ENCODE measurements at regions of chr6 and their contacts with region 1.

Region 1: GRCh38 chr6:142926494-142927270 is 18.3 kb downstream of the HIVEP2 start:
- DNase-seq: peak; percentile 66 to 91 (median 83)
- H3K4me3 ChIP-seq: peak overlapping the region; percentile 92
- H3K4me3 Mint-ChIP-seq: peak overlapping the region; percentile 89 to 98 (median 94)
- H3K27ac ChIP-seq: peak overlapping the region; percentile 97
- H3K27ac Mint-ChIP-seq: peak overlapping the region; percentile 93 to 100 (median 98)
- H3K4me1 ChIP-seq: peaks cover 54% of the 10 kb centered on the region
- H3K4me1 Mint-ChIP-seq: peaks cover 58 to 76% (median 71%) of the 10 kb centered on the region in 3 donors
- H3K27me3 ChIP-seq: no peaks in the 10 kb centered on the region
- H3K27me3 Mint-ChIP-seq: no peaks in the 10 kb centered on the region

Region 2: DNA sequence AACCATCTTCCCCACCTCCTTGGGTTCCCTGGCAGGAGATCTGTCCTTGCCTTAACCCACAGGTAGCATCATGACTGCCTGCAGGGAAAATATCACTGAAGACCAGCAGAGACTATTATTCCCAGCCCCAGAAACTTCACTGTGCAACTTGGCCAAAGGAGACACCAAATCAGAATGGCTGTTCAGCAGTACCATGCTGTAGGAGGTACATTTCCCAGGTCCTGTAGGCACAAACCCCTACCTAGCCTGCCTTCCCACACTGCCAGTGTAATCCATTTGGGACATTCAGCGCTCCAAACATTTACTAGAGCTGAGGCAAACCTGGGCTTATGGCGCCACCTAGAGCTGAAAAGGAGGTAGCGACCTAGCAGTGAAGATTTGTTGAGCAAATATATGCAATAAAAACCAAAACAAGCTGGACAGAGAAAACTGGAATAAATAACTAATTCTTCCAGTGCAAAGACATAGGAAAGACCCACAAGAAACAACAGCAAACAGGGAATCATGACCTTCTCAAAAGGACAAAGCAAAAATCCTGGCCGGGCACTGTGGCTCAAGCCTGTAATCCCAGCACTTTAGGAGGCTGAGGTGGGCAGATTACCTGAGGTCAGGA is 719.3 kb before region 1 on chr6:
- CTCF ChIA-PET with region 1: no interaction called
- POLR2A ChIA-PET with region 1: no interaction called
- DNase-seq: peak; percentile 6 to 60 (median 23)
- H3K4me3 ChIP-seq: no peak overlapping the region
- H3K4me3 Mint-ChIP-seq: no peak overlapping the region
- H3K27ac ChIP-seq: no peak overlapping the region
- H3K27ac Mint-ChIP-seq: peak overlapping the region in 3 of 8 donors; percentile 19 to 57 (median 47)
- H3K4me1 ChIP-seq: no peaks in the 10 kb centered on the region
- H3K4me1 Mint-ChIP-seq: peaks cover 0 to 4% (median 3%) of the 10 kb centered on the region in 3 donors
- H3K27me3 ChIP-seq: no peaks in the 10 kb centered on the region
- H3K27me3 Mint-ChIP-seq: no peaks in the 10 kb centered on the region

Region 3: GRCh38 chr6:142756215-142756634 is 170.5 kb before region 1 on chr6:
- CTCF ChIA-PET with region 1: no interaction called
- POLR2A ChIA-PET with region 1: no interaction called
- DNase-seq: no peak
- H3K4me3 ChIP-seq: no peak overlapping the region
- H3K4me3 Mint-ChIP-seq: no peak overlapping the region
- H3K27ac ChIP-seq: no peak overlapping the region
- H3K27ac Mint-ChIP-seq: peak overlapping the region in 7 of 8 donors; percentile 17 to 96 (median 64)
- H3K4me1 ChIP-seq: peaks cover 3% of the 10 kb centered on the region
- H3K4me1 Mint-ChIP-seq: peaks cover 23 to 47% (median 29%) of the 10 kb centered on the region in 3 donors
- H3K27me3 ChIP-seq: no peaks in the 10 kb centered on the region
- H3K27me3 Mint-ChIP-seq: peaks cover 0 to 2% of the 10 kb centered on the region in 2 donors

Region 4: GRCh38 chr6:142857233-142857761 is 69.4 kb before region 1 on chr6:
- CTCF ChIA-PET with region 1: interaction called, 3 read pairs
- POLR2A ChIA-PET with region 1: interaction called, 11 read pairs
- DNase-seq: peak in 1 of 5 donors; percentile 70
- H3K4me3 ChIP-seq: peak overlapping the region; percentile 52
- H3K4me3 Mint-ChIP-seq: peak overlapping the region; percentile 75 to 91 (median 86)
- H3K27ac ChIP-seq: peak overlapping the region; percentile 62
- H3K27ac Mint-ChIP-seq: peak overlapping the region; percentile 88 to 99 (median 96)
- H3K4me1 ChIP-seq: peaks cover 82% of the 10 kb centered on the region
- H3K4me1 Mint-ChIP-seq: peaks cover 83 to 96% (median 95%) of the 10 kb centered on the region in 3 donors
- H3K27me3 ChIP-seq: no peaks in the 10 kb centered on the region
- H3K27me3 Mint-ChIP-seq: no peaks in the 10 kb centered on the region

Region 5: GRCh38 chr6:142902636-142903053 is 24.0 kb before region 1 on chr6:
- CTCF ChIA-PET with region 1: interaction called, 4 read pairs
- POLR2A ChIA-PET with region 1: interaction called, 60 read pairs
- DNase-seq: peak; percentile 65 to 91 (median 85)
- H3K4me3 ChIP-seq: peak overlapping the region; percentile 21
- H3K4me3 Mint-ChIP-seq: peak overlapping the region; percentile 38 to 83 (median 80)
- H3K27ac ChIP-seq: peak overlapping the region; percentile 62
- H3K27ac Mint-ChIP-seq: peak overlapping the region; percentile 92 to 99 (median 96)
- H3K4me1 ChIP-seq: peaks cover 72% of the 10 kb centered on the region
- H3K4me1 Mint-ChIP-seq: peaks cover 13 to 67% (median 13%) of the 10 kb centered on the region in 3 donors
- H3K27me3 ChIP-seq: no peaks in the 10 kb centered on the region
- H3K27me3 Mint-ChIP-seq: no peaks in the 10 kb centered on the region

Region 6: DNA sequence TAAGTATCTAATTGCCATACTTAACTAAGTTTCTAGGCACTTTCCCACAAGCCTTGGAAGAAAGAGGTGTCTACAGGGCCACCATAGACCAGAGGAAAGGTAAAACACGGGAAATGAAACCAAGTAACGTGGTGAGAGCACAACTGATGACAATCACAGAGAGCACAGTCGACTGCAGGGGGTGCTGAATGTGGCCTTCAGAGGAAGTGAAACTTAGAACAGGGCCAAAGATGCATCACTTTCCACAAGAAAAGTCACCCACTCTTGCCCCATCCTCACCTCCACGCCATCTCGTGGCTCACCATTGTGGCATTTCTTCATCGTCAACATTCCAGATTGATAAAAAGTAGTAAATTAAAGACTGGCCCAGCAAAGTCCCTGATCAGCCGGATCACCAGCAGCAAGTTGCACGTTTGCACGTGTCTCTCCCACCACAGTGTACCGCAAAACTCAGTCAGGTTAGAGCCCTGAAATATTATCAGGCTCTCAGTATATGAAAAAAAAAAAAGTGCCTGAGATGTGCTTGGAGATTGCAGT is 13.1 kb before region 1 on chr6:
- CTCF ChIA-PET with region 1: interaction called, 26 read pairs
- POLR2A ChIA-PET with region 1: interaction called, 36 read pairs
- DNase-seq: peak; percentile 43 to 84 (median 75)
- H3K4me3 ChIP-seq: peak overlapping the region; percentile 66
- H3K4me3 Mint-ChIP-seq: peak overlapping the region; percentile 82 to 92 (median 86)
- H3K27ac ChIP-seq: peak overlapping the region; percentile 52
- H3K27ac Mint-ChIP-seq: peak overlapping the region; percentile 97 to 100 (median 99)
- H3K4me1 ChIP-seq: peaks cover 79% of the 10 kb centered on the region
- H3K4me1 Mint-ChIP-seq: peaks cover 84 to 90% (median 90%) of the 10 kb centered on the region in 3 donors
- H3K27me3 ChIP-seq: no peaks in the 10 kb centered on the region
- H3K27me3 Mint-ChIP-seq: no peaks in the 10 kb centered on the region

Region 7: DNA sequence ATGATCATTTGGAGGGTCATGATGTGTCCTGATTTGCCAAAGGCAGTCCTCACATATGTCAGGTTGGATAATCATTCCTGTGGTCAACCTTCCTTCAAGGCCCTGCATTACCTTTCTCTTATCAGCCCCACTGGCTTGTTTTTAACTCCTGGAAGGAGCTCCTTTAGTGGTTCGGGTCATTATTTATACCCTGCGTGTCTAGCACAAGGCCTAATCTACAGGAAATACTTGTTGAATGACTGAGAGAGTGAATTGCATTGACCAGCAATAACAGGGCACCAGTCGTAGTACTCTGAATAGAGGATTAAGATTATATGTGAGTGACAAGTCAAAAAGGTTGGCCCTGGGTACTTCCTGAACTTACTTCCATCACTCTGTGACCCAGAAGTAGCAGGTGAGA is 13.8 kb after region 1 on chr6:
- CTCF ChIA-PET with region 1: interaction called, 18 read pairs
- POLR2A ChIA-PET with region 1: interaction called, 55 read pairs
- DNase-seq: no peak
- H3K4me3 ChIP-seq: no peak overlapping the region
- H3K4me3 Mint-ChIP-seq: peak overlapping the region; percentile 68 to 100 (median 99)
- H3K27ac ChIP-seq: no peak overlapping the region
- H3K27ac Mint-ChIP-seq: peak overlapping the region; percentile 94 to 100 (median 99)
- H3K4me1 ChIP-seq: peaks cover 81% of the 10 kb centered on the region
- H3K4me1 Mint-ChIP-seq: peaks cover 78 to 87% (median 86%) of the 10 kb centered on the region in 3 donors
- H3K27me3 ChIP-seq: no peaks in the 10 kb centered on the region
- H3K27me3 Mint-ChIP-seq: peaks cover 0 to 4% of the 10 kb centered on the region in 2 donors

Region 8: GRCh38 chr6:142946181-142946923 is 19.7 kb after region 1 on chr6:
- CTCF ChIA-PET with region 1: interaction called, 18 read pairs
- POLR2A ChIA-PET with region 1: interaction called, 55 read pairs
- DNase-seq: peak; percentile 91 to 95 (median 93)
- H3K4me3 ChIP-seq: peak overlapping the region; percentile 89
- H3K4me3 Mint-ChIP-seq: peak overlapping the region; percentile 94 to 100 (median 96)
- H3K27ac ChIP-seq: peak overlapping the region; percentile 98
- H3K27ac Mint-ChIP-seq: peak overlapping the region; percentile 98 to 100 (median 99)
- H3K4me1 ChIP-seq: peaks cover 34% of the 10 kb centered on the region
- H3K4me1 Mint-ChIP-seq: peaks cover 36 to 39% (median 38%) of the 10 kb centered on the region in 3 donors
- H3K27me3 ChIP-seq: no peaks in the 10 kb centered on the region
- H3K27me3 Mint-ChIP-seq: peaks cover 0 to 4% of the 10 kb centered on the region in 2 donors

Region 9: DNA sequence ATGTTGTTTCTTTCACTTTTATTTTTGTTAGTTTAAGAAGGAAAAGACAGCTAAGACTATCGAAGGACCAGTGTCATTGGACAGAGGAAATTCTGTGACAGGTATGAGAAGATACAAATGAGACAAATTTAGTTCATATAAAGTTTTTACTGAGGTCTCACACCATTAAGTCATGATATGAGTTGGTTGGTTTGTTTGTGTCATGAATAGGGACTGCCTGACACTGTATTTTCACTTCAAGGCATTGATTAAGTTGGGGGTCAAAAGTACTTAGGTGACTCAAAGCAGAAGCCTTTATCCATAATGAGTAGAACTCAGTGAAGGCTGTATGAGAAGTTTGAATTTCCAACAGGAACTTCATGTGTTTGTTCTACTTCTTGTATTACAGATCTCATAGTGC is 39.6 kb after region 1 on chr6:
- CTCF ChIA-PET with region 1: no interaction called
- POLR2A ChIA-PET with region 1: no interaction called
- DNase-seq: no peak
- H3K4me3 ChIP-seq: no peak overlapping the region
- H3K4me3 Mint-ChIP-seq: no peak overlapping the region
- H3K27ac ChIP-seq: no peak overlapping the region
- H3K27ac Mint-ChIP-seq: no peak overlapping the region
- H3K4me1 ChIP-seq: no peaks in the 10 kb centered on the region
- H3K4me1 Mint-ChIP-seq: no peaks in the 10 kb centered on the region
- H3K27me3 ChIP-seq: no peaks in the 10 kb centered on the region
- H3K27me3 Mint-ChIP-seq: no peaks in the 10 kb centered on the region